ENCODE measurements at regions of chr5 and their contacts with region 1.

Region 1: DNA sequence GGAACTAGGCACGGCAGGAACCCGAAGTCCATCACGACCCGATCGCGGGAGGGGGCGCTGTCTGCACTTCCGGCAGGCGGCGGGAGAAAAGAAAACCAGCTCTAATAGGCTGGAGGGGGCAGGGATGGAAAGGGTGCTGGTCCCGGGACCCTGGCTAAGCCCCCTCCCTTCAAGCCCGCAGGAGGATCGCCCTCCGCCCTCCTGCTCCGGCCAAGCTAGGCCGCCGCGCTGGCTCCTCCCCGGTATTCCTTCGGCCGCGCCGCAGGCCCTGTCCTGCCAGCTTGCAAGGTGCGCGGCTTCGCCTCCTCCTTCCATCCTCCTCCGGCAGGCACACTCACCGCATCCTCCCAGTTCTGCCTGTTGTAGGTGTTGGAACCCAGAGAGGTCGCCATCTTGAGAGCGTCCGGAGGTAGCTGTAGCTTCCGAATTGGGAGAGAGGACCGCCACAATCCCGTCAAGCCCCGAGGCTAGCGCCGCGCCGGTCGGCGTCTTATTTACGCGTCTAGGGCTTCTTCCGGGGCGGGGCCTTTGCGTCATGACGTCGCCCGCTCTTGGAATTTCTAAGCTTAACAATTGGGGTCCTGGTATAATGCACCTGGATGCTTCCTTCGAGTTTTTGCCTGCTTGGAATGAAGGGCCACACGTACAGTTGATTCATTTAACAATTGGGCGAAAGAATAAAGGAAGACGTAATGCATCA is at the start of gene RBM22:
- DNase-seq: peak; percentile 95
- H3K4me3 Mint-ChIP-seq: no peak within 1 kb of the TSS
- H3K27ac Mint-ChIP-seq: no peak within 1 kb of the TSS
- H3K4me1 Mint-ChIP-seq: peaks cover 6% of the 10 kb centered on the region
- H3K27me3 Mint-ChIP-seq: no peaks in the 10 kb centered on the region
- CTCF ChIP-seq: peak; percentile 76
- total RNA-seq, gene RBM22: 66.0 and 66.9 TPM in 2 replicates

Region 2: GRCh38 chr5:149240354-149240998 is 1460.3 kb before region 1 on chr5:
- CTCF ChIA-PET with region 1: no interaction called
- POLR2A ChIA-PET with region 1: no interaction called
- intact Hi-C with region 1: no loop called
- DNase-seq: no peak
- H3K4me3 Mint-ChIP-seq: no peak overlapping the region
- H3K27ac Mint-ChIP-seq: no peak overlapping the region
- H3K4me1 Mint-ChIP-seq: peaks cover 7% of the 10 kb centered on the region
- H3K27me3 Mint-ChIP-seq: no peaks in the 10 kb centered on the region
- CTCF ChIP-seq: no peak

Region 3: GRCh38 chr5:150431574-150431973 is 269.2 kb before region 1 on chr5:
- CTCF ChIA-PET with region 1: no interaction called
- POLR2A ChIA-PET with region 1: no interaction called
- intact Hi-C with region 1: no loop called
- DNase-seq: no peak
- H3K4me3 Mint-ChIP-seq: no peak overlapping the region
- H3K27ac Mint-ChIP-seq: no peak overlapping the region
- H3K4me1 Mint-ChIP-seq: peaks cover 9% of the 10 kb centered on the region
- H3K27me3 Mint-ChIP-seq: no peaks in the 10 kb centered on the region
- CTCF ChIP-seq: no peak

Region 4: GRCh38 chr5:150458819-150459557 is 241.8 kb before region 1 on chr5:
- CTCF ChIA-PET with region 1: interaction called, 3 read pairs
- POLR2A ChIA-PET with region 1: interaction called, 3 read pairs
- intact Hi-C with region 1: loop called (anchors 5 kb)
- DNase-seq: peak; percentile 76
- H3K4me3 Mint-ChIP-seq: no peak overlapping the region
- H3K27ac Mint-ChIP-seq: peak overlapping the region; percentile 57
- H3K4me1 Mint-ChIP-seq: peaks cover 13% of the 10 kb centered on the region
- H3K27me3 Mint-ChIP-seq: no peaks in the 10 kb centered on the region
- CTCF ChIP-seq: peak; percentile 98

Region 5: DNA sequence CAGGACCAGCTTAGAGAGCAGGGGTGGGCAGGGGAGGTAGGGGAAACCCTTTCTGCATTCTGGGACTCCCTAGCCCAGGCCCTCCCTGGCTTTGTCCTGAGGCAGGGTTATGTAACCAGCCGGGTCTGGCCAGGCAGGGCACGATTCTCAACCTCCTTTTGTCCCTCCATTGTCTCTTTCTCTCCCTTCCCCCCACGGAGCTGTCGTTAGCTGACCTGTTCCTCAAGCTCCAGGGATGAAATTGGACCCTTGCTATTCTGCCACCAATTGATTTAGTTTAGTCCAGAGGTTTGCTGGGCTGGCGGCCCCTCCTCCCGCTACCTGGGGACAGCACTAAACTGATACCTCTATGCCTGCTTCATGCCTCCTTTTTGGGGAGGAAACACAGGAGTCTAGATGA is 202.2 kb before region 1 on chr5:
- CTCF ChIA-PET with region 1: no interaction called
- POLR2A ChIA-PET with region 1: no interaction called
- intact Hi-C with region 1: no loop called
- DNase-seq: no peak
- H3K4me3 Mint-ChIP-seq: peak overlapping the region; percentile 70
- H3K27ac Mint-ChIP-seq: peak overlapping the region; percentile 94
- H3K4me1 Mint-ChIP-seq: peaks cover 78% of the 10 kb centered on the region
- H3K27me3 Mint-ChIP-seq: no peaks in the 10 kb centered on the region
- CTCF ChIP-seq: no peak

Region 6: GRCh38 chr5:150656191-150657132 is 44.3 kb before region 1 on chr5:
- CTCF ChIA-PET with region 1: interaction called, 10 read pairs
- POLR2A ChIA-PET with region 1: interaction called, 6 read pairs
- intact Hi-C with region 1: no loop called
- DNase-seq: peak; percentile 58
- H3K4me3 Mint-ChIP-seq: peak overlapping the region; percentile 71
- H3K27ac Mint-ChIP-seq: no peak overlapping the region
- H3K4me1 Mint-ChIP-seq: peaks cover 14% of the 10 kb centered on the region
- H3K27me3 Mint-ChIP-seq: peaks cover 11% of the 10 kb centered on the region
- CTCF ChIP-seq: peak; percentile 99

Region 7: GRCh38 chr5:150723845-150724244 is 23.1 kb after region 1 on chr5:
- CTCF ChIA-PET with region 1: interaction called, 13 read pairs
- POLR2A ChIA-PET with region 1: interaction called, 10 read pairs
- intact Hi-C with region 1: no loop called
- DNase-seq: peak; percentile 16
- H3K4me3 Mint-ChIP-seq: no peak overlapping the region
- H3K27ac Mint-ChIP-seq: no peak overlapping the region
- H3K4me1 Mint-ChIP-seq: no peaks in the 10 kb centered on the region
- H3K27me3 Mint-ChIP-seq: no peaks in the 10 kb centered on the region
- CTCF ChIP-seq: no peak

Region 8: DNA sequence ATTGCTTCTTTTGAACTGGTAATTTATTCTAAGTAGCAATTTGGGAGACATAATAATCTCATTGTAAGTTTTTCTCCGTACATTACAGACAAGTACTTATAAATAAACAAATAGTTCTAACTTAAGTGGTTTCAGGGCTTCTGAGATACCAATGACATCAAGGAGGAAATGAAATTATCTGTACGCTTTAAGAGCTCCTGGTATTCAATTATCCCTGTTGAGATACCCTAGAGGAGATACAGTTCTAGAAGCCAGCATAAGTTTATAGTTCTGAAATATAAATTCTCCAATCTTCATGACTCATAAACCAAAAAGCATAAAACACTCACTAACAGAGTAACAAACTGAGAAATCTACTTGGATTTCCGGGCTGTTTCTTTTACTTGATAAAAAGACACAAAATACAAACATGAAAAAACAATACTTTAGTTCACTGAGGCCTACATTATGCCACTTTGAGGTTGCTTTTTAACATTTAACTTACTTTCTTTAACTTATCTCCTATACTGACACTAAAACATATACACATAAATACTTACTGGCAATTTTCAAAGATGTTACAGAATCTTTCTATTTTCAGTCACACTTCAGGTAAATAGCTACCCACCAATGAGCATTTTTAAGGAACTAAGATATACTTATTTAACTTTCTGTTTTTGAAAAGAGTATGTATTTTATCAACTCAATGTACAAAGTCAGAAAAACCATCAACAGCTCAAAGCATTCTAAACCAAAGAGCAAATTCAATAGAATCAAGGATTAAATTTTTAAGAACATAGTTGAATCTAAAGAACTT is 50.5 kb after region 1 on chr5:
- CTCF ChIA-PET with region 1: interaction called, 10 read pairs
- POLR2A ChIA-PET with region 1: interaction called, 101 read pairs
- intact Hi-C with region 1: no loop called
- DNase-seq: no peak
- H3K4me3 Mint-ChIP-seq: no peak overlapping the region
- H3K27ac Mint-ChIP-seq: peak overlapping the region; percentile 16
- H3K4me1 Mint-ChIP-seq: peaks cover 8% of the 10 kb centered on the region
- H3K27me3 Mint-ChIP-seq: no peaks in the 10 kb centered on the region
- CTCF ChIP-seq: no peak

Region 9: GRCh38 chr5:150778517-150779396 is 78.0 kb after region 1 on chr5 and contains the start of gene SMIM3:
- CTCF ChIA-PET with region 1: interaction called, 66 read pairs
- POLR2A ChIA-PET with region 1: interaction called, 61 read pairs
- intact Hi-C with region 1: loop called (anchors 1 kb)
- DNase-seq: peak; percentile 84
- H3K4me3 Mint-ChIP-seq: peak within 1 kb of the TSS; percentile 99
- H3K27ac Mint-ChIP-seq: peak within 1 kb of the TSS; percentile 91
- H3K4me1 Mint-ChIP-seq: peaks cover 47% of the 10 kb centered on the region
- H3K27me3 Mint-ChIP-seq: no peaks in the 10 kb centered on the region
- CTCF ChIP-seq: peak; percentile 54
- total RNA-seq, gene SMIM3: 21.7 and 26.1 TPM in 2 replicates

Region 10: GRCh38 chr5:150846654-150847333 is 146.1 kb after region 1 on chr5:
- CTCF ChIA-PET with region 1: interaction called, 32 read pairs
- POLR2A ChIA-PET with region 1: interaction called, 4 read pairs
- intact Hi-C with region 1: loop called (anchors 1 kb)
- DNase-seq: peak; percentile 92
- H3K4me3 Mint-ChIP-seq: no peak overlapping the region
- H3K27ac Mint-ChIP-seq: no peak overlapping the region
- H3K4me1 Mint-ChIP-seq: no peaks in the 10 kb centered on the region
- H3K27me3 Mint-ChIP-seq: no peaks in the 10 kb centered on the region
- CTCF ChIP-seq: peak; percentile 85

Region 11: DNA sequence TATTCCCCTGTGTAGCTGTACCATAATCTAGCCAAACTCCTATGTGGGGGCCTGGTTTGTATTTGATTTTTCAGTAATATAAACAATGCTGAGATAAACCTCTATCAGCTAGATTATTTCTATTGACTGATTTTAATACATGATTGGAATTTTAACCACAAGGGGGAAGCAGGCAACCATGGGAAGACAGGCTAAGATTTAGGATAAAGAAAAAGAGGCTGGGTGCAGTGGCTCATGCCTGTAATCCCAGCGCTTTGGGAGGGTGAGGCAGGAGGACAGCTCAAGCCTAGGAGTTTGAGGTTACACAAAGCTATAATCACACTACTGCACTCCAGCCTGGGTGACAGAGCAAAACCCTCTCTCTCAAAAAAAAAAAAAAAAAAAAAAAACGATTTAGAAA is 301.5 kb after region 1 on chr5:
- CTCF ChIA-PET with region 1: no interaction called
- POLR2A ChIA-PET with region 1: no interaction called
- intact Hi-C with region 1: no loop called
- DNase-seq: peak; percentile 77
- H3K4me3 Mint-ChIP-seq: no peak overlapping the region
- H3K27ac Mint-ChIP-seq: no peak overlapping the region
- H3K4me1 Mint-ChIP-seq: no peaks in the 10 kb centered on the region
- H3K27me3 Mint-ChIP-seq: no peaks in the 10 kb centered on the region
- CTCF ChIP-seq: peak; percentile 79